ENCODE measurements at regions of chr21 and their contacts with region 1.

Region 1: GRCh38 chr21:26943921-26944320 is 23.0 kb downstream of the ADAMTS5 start:
- DNase-seq: no peak
- ATAC-seq: no peak
- H3K4me3 ChIP-seq: no peak overlapping the region
- H3K27ac ChIP-seq: no peak overlapping the region
- H3K4me1 ChIP-seq: peaks cover 8% of the 10 kb centered on the region
- H3K27me3 ChIP-seq: no peaks in the 10 kb centered on the region
- CTCF ChIP-seq: no peak

Region 2: DNA sequence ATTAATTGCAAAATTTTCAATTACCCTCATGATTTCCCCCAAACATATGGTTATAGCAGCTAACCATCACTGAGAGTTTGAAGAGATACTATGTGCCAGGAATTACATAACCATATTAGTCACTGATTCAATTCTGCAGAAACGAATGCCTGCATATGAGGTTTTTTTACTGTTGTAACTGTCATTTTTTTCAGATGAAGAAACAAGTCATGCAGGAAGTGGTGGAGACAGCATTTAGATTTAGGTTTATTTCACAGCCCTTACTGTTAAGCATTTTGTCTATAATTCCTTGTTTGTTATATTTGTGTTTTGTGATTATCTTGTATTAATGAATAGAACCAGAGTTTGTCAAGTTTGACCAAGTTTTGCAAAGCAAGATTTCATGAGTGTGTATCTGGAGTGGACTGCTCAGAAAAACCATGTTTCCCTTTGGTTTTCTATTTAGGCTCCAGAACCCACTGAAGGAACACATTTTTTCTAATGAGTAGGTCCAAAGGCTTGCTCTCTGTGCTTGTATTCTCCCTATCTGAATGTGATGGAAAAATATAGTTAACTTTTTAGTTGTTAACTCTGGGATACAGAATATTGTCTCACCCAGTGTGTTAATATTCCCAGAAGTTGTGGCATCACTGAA is 331.5 kb after region 1 on chr21:
- intact Hi-C with region 1: loop called in 1 of 2 experiments (anchors 1 kb)
- DNase-seq: no peak
- ATAC-seq: no peak
- H3K4me3 ChIP-seq: no peak overlapping the region
- H3K27ac ChIP-seq: peak overlapping the region; percentile 12
- H3K4me1 ChIP-seq: no peaks in the 10 kb centered on the region
- H3K27me3 ChIP-seq: no peaks in the 10 kb centered on the region
- CTCF ChIP-seq: no peak